ENCODE measurements at regions of chr1 and their contacts with region 1.

Region 1: DNA sequence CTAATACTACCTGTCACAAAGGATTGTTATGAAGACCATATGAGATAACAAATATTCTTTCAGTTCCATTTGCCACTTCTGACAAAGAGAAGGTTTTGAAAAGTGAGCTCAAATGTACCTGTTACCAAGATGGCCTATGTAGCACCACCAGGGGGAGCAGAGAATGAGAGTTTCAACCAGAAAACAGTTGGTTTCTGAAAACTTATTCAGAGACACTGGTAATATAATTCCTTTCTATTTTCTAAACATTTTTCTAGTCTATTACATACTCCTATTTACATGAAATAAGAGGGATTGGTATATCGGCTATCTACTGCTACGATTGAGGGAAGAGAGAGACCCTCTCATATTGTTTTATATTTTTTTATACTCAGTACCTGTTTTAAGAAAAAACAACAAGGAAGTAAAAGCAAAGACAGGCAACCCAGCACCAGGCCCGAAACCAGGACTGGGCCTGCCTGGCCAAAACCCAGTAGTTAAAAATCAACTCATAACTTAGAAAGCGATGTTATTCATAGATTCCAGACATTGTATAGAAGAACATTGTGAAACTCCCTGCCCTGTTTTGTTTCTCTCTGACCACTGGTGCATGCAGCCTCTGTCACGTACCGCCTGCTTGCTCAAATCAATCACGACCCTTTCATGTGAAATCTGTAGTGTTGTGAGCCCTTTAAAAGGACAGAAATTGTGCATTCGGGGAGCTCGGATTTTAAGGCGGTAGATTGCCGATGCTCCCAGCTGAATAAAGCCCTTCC is 48.3 kb downstream of the IL23R start:
- DNase-seq: peak; percentile 22
- CTCF ChIP-seq: peak; percentile 49

Region 2: GRCh38 chr1:66764994-66765578 is 449.5 kb before region 1 on chr1:
- CTCF ChIA-PET with region 1: interaction called, 16 read pairs
- POLR2A ChIA-PET with region 1: no interaction called
- DNase-seq: peak; percentile 39
- CTCF ChIP-seq: peak; percentile 71

Region 3: DNA sequence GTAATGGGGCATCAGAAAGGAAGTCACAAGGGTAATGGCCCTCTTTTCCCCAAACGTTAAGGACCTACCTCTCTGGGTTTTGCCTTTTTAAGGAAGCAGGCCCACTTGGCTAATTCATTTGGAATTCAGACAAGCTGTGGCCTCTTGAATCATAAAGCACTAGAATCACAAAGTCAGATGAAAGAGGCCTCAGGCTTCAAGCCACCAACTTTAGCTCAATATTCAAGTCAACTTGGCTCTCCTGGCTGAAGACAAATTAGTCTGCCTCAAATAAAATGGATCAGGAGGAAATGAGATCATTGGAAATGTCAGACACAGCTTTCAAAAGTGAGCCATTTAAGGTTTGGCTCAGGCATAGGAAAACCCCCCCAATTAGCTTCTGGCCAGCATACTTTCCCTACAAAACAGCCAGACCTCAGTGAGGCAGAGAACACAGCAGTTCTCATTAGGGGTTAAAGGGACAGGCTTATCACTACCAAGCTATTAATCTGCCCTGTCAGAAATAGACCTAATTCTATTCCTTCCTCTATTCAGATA is 194.9 kb before region 1 on chr1:
- CTCF ChIA-PET with region 1: interaction called, 12 read pairs
- POLR2A ChIA-PET with region 1: no interaction called
- DNase-seq: no peak
- CTCF ChIP-seq: no peak

Region 4: DNA sequence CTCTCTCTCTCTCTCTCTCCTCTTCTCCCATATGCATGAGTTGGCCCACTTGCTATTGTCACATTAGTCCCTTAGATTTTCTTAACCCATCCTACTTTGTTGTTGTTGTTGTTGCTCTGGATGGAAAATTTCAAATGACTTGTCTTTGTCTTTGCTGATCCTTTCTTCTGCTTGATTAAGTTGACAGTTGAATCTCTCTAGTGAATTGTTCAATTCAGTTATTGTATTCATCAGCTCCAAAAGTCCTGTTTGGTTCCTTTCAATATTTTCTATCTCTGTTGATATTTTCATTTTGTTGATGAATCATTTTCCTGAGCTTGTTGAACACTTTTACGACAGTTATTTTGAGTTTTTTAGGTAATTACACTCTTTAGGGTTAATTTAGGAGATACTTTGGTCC is 141.8 kb before region 1 on chr1:
- CTCF ChIA-PET with region 1: no interaction called
- POLR2A ChIA-PET with region 1: no interaction called
- DNase-seq: no peak
- CTCF ChIP-seq: no peak

Region 5: DNA sequence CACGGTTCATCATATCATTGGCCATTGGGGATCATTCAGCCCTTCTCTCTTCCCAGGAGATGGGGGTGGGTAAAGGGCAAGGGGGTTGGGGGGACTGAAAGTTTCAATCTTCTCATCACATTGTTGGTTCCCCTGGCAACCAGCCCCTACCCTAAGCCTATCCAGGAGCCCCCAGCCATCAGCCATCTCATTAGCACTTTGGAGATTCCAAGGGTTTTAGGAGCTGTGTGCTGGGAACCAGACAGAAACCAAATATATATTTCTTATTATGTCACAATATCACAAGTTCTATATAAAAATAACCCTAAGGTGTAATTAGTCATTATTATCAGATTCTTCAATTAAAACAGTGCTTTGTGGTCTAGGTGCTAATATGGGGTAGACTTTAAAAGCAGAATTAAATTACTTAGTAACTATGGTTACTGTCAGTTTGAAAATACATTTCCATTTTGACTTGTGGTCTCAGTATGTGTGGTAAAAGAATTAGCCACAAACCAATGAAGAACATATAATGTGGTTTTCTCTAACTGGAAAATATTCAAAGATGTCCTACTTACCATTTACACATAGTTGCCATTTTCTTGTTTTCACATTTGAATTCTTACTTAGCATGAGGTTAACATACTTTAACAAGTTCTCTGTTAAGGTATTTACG is 20.3 kb before region 1 on chr1:
- CTCF ChIA-PET with region 1: interaction called, 66 read pairs
- POLR2A ChIA-PET with region 1: interaction called, 4 read pairs
- DNase-seq: peak; percentile 29
- CTCF ChIP-seq: no peak

Region 6: GRCh38 chr1:67239738-67240137 is 25.1 kb after region 1 on chr1:
- CTCF ChIA-PET with region 1: interaction called, 18 read pairs
- POLR2A ChIA-PET with region 1: no interaction called
- DNase-seq: no peak
- CTCF ChIP-seq: no peak

Region 7: DNA sequence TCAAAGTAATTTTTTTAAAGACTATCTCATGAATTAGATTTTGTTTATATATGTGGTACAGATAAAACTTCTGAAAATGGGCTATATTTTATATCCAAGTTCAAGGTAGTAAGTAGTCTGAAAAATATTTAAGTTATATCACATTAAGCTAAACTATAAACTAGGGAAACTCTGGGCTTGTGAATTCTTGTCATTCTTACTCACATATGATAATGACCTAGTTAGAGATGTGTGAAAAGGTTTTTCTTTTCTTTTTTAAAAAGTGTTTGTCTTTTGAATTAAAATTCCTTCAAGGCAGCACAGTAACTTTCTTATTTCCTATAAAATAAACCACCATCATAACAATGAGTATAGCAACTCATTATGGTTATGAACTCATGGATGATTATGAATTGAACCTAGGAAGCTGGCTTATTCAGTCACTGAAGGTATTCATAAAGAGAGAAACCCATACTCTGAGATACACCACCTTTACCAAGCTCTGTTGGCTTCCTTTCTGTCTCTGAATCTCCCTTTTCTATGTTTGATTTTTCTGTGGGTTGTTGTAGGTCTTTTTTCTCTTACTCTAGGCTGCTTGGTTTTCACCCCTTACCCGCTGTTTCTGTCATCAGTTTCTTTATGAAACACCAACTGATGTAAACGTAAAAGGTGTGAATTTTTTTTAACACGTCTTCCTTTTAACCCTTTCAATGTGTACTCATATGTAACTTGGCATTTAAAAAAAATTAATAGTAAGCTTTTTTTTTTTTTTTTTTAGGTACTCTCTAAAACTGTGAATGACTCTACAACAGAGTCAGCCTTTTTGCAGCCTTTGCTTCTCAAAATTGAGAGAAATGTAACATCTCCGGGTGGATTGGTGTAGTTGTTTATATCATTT is 118.3 kb after region 1 on chr1:
- CTCF ChIA-PET with region 1: interaction called, 19 read pairs
- POLR2A ChIA-PET with region 1: interaction called, 3 read pairs
- DNase-seq: peak; percentile 69
- CTCF ChIP-seq: no peak

Region 8: DNA sequence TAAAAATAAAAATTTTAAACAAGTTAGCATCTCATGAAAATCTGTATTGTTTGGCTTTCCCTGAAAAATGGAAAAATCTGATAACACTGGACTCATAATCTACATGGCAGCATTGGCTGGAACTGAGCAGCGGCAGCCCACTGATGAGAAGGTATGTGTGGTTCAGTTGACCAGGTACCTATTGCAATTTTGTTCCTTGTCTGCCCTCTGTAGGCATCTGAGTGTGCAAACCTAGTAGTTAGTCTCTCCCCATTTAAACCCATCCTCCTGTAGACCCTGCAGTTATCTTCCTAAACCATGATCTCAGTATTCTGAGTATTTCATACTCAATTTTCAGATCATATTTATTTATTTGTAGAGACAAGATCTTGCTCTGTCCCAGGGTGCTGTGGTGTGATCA is 275.0 kb after region 1 on chr1:
- CTCF ChIA-PET with region 1: interaction called, 35 read pairs
- POLR2A ChIA-PET with region 1: no interaction called
- DNase-seq: peak; percentile 49
- CTCF ChIP-seq: peak; percentile 29

Region 9: DNA sequence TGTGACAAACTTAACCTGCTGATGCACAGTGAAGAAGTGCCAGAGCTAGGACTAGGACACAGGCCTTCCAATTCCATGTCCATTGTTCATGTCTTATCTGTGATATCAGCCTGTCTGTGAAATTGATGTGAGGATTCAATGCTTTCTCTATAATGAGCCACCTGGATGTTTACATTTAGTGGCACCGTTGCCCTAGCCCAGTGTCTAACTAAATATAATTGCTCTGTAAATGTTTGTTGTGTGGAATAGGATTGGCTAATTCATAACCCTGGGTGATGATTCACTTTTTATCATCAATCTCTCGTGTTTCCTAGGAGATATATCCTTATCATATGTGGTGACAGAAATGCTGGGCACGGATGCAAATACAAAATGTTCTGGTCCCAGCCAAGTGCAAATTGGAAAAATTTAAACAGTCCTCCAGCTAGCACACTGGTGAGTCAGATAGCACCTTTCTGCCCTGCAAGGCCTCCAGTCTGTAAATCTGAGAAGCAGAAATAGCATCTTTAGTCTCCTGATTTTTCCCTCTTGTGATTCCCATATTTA is 665.5 kb after region 1 on chr1:
- CTCF ChIA-PET with region 1: no interaction called
- POLR2A ChIA-PET with region 1: no interaction called
- DNase-seq: no peak
- CTCF ChIP-seq: no peak